ENCODE measurements at regions of chr6 and their contacts with region 1.

Region 1: GRCh38 chr6:151323791-151324487 is 67.4 kb downstream of the ZBTB2 start:
- DNase-seq: peak; percentile 86
- ATAC-seq: peak; percentile 93

Region 2: DNA sequence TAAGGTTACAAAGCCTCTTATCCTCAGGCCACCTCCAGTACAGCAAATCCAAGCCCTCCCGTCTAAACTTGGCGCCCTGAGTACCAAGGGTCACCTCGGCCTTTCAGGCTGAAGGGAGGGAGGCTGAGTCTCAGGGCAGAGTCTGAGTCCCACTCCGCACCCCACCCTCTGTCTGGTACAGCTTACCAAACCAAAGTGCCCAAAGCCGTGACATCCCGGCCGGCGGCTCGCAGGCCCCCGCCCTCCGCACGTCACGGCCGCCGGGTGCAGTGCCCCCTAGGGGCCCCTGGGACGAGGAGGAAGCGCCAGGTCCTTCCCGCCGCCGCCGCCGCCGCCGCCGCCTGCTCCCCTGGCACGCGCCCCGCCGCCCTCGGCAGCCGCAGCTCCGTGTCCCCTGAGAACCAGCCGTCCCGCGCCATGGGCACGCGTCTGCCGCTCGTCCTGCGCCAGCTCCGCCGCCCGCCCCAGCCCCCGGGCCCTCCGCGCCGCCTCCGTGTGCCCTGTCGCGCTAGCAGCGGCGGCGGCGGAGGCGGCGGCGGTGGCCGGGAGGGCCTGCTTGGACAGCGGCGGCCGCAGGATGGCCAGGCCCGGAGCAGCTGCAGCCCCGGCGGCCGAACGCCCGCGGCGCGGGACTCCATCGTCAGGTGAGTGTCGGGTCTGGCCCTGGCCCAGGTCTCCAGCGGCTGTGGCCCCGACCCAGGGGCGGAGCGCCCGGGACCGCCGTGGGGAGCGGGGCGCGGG is 458.4 kb before region 1 on chr6 and contains the start of gene MTHFD1L:
- intact Hi-C with region 1: no loop called
- DNase-seq: peak; percentile 86
- ATAC-seq: peak; percentile 68
- total RNA-seq, gene MTHFD1L: 3.4 TPM

Region 3: DNA sequence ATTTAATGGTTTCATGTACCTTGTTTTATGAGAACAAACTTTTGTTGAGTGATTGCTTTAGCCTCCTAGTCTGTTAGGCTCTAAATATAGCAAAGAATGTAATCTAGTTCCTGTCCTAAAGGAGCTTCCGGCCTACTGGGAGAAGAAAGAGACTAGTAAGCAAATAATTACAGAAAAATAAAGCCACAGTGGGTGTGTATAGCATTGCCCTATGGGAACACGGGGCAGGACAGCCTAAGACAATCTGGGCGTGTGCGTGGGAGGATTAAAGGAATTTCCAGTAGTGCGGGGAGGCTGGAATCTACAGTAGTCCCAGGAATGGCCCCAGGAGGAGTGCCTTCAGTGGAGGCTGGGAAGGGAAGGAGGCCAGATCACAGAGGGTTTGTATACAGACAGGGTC is 182.3 kb before region 1 on chr6:
- intact Hi-C with region 1: loop called (anchors 10 kb)
- DNase-seq: no peak
- ATAC-seq: peak; percentile 65

Region 4: GRCh38 chr6:151216804-151217203 is 107.1 kb before region 1 on chr6:
- intact Hi-C with region 1: no loop called
- DNase-seq: no peak
- ATAC-seq: no peak

Region 5: DNA sequence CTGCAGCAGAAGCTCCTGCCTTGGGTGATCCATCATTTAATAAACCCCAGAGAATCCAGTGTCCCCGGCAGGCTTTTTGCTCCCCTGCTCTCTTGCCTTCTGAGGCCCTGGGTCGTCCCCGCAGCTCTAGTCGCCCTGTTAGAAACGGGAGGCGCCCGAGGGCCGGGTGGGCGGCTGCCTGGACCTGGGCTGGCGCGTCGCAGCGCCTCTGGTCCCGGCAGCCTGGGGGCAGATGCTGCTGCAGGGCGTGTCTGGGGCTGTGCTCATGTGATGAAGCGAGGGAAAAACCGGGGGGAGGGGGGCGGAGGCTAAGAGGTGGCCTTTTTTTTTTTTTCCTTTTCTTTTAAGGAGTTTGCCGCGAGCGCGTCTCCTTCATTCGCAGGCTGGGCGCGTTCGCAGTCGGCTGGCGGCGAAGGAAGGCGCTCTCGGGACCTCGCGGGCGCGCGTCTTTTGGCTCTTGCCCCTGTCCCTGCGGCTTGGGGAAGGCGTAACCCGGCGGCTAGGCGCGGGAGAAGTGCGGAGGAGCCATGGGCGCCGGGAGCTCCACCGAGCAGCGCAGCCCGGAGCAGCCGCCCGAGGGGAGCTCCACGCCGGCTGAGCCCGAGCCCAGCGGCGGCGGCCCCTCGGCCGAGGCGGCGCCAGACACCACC is 83.8 kb before region 1 on chr6:
- intact Hi-C with region 1: loop called (anchors 1 kb)
- DNase-seq: peak; percentile 89
- ATAC-seq: peak; percentile 92

Region 6: GRCh38 chr6:151349651-151350282 is 25.8 kb after region 1 on chr6:
- intact Hi-C with region 1: no loop called
- DNase-seq: no peak
- ATAC-seq: no peak

Measured in Right ventricle myocardium inferior (tissue), 1 donor.